Mammary epithelial cell (primary cell): ENCODE measurements at regions of chr2 and their contacts with region 1.

Region 1: GRCh38 chr2:227805578-227805977 is 8.1 kb upstream of the CCL20 start:
- DNase-seq: no peak
- H3K4me3 ChIP-seq: no peak overlapping the region
- H3K27ac ChIP-seq: no peak overlapping the region
- H3K4me1 ChIP-seq: no peaks in the 10 kb centered on the region
- H3K27me3 ChIP-seq: no peaks in the 10 kb centered on the region
- CTCF ChIP-seq: no peak

Region 2: DNA sequence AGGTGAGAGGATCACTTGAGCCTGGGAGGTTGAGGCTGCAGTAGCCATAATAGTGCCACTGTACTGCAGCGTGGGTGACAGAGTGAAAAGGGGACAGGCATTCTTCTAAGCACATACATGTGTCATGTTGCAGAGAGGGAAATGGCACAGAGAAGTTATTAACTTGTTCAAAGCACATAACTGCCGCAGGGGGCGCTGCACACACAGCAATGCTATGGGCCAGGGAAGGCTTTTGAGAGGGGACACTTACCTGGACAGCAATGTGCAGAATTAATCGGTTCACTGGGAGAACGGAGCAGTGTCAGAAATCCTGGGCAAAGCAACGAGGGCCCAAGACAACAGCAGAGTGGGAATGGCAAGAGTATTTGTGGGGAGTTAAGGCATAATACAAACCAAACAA is 57.5 kb before region 1 on chr2:
- CTCF ChIA-PET with region 1: no interaction called
- dilution Hi-C with region 1: no loop called
- in situ Hi-C with region 1: no loop called
- intact Hi-C with region 1: no loop called
- DNase-seq: no peak
- H3K4me3 ChIP-seq: no peak overlapping the region
- H3K27ac ChIP-seq: no peak overlapping the region
- H3K4me1 ChIP-seq: peaks cover 3% of the 10 kb centered on the region
- H3K27me3 ChIP-seq: no peaks in the 10 kb centered on the region
- CTCF ChIP-seq: peak; percentile 18 to 20

Region 3: GRCh38 chr2:227774011-227774624 is 31.5 kb before region 1 on chr2:
- CTCF ChIA-PET with region 1: interaction called, 10 read pairs
- dilution Hi-C with region 1: no loop called
- in situ Hi-C with region 1: no loop called
- intact Hi-C with region 1: no loop called
- DNase-seq: no peak
- H3K4me3 ChIP-seq: no peak overlapping the region
- H3K27ac ChIP-seq: no peak overlapping the region
- H3K4me1 ChIP-seq: no peaks in the 10 kb centered on the region
- H3K27me3 ChIP-seq: no peaks in the 10 kb centered on the region
- CTCF ChIP-seq: no peak